ENCODE measurements at regions of chr17 and their contacts with region 1.

Region 1: GRCh38 chr17:77233635-77234334 is 93.0 kb downstream of the SEC14L1 start:
- DNase-seq: peak in 1 of 2 experiments; percentile 49
- H3K4me3 ChIP-seq: no peak overlapping the region
- H3K27ac ChIP-seq: peak overlapping the region; percentile 46; the same call in 1 of the 2 replicates
- H3K4me1 ChIP-seq: no peaks in the 10 kb centered on the region
- H3K27me3 ChIP-seq: no peaks in the 10 kb centered on the region
- CTCF ChIP-seq: no peak

Region 2: GRCh38 chr17:77186141-77186604 is 47.6 kb before region 1 on chr17:
- CTCF ChIA-PET with region 1: no interaction called
- POLR2A ChIA-PET with region 1: interaction called, 23 read pairs
- intact Hi-C with region 1: no loop called
- DNase-seq: no peak
- H3K4me3 ChIP-seq: no peak overlapping the region
- H3K27ac ChIP-seq: no peak overlapping the region
- H3K4me1 ChIP-seq: no peaks in the 10 kb centered on the region
- H3K27me3 ChIP-seq: no peaks in the 10 kb centered on the region
- CTCF ChIP-seq: no peak

Region 3: GRCh38 chr17:77592106-77592865 is 358.5 kb after region 1 on chr17:
- CTCF ChIA-PET with region 1: no interaction called
- POLR2A ChIA-PET with region 1: interaction called, 10 read pairs
- intact Hi-C with region 1: no loop called
- DNase-seq: no peak
- H3K4me3 ChIP-seq: no peak overlapping the region
- H3K27ac ChIP-seq: no peak overlapping the region
- H3K4me1 ChIP-seq: no peaks in the 10 kb centered on the region
- H3K27me3 ChIP-seq: peaks cover 79% of the 10 kb centered on the region
- CTCF ChIP-seq: no peak